Activated CD8-positive, alpha-beta memory T cell treated with anti-CD3 and anti-CD28 coated beads, Interleukin-2, amount 10 ng/mL, durations not matched to agents 7 days and 5 days (primary cell): ENCODE measurements at regions of chr5 and their contacts with region 1.

Region 1: GRCh38 chr5:134289509-134290113 is 63.7 kb upstream of the PPP2CA start:
- DNase-seq: peak; percentile 46
- ATAC-seq: peak; percentile 67
- H3K4me3 Mint-ChIP-seq: no peak overlapping the region
- H3K27ac Mint-ChIP-seq: no peak overlapping the region
- H3K4me1 Mint-ChIP-seq: peaks cover 5% of the 10 kb centered on the region
- H3K27me3 Mint-ChIP-seq: peaks cover 18% of the 10 kb centered on the region

Region 2: GRCh38 chr5:134184155-134185135 is 105.2 kb before region 1 on chr5:
- CTCF ChIA-PET with region 1: interaction called, 48 read pairs
- DNase-seq: peak; percentile 84
- ATAC-seq: peak; percentile 96
- H3K4me3 Mint-ChIP-seq: no peak overlapping the region
- H3K27ac Mint-ChIP-seq: no peak overlapping the region
- H3K4me1 Mint-ChIP-seq: no peaks in the 10 kb centered on the region
- H3K27me3 Mint-ChIP-seq: peaks cover 2% of the 10 kb centered on the region

Region 3: GRCh38 chr5:134267366-134268018 is 22.1 kb before region 1 on chr5:
- CTCF ChIA-PET with region 1: no interaction called
- DNase-seq: no peak
- ATAC-seq: no peak
- H3K4me3 Mint-ChIP-seq: no peak overlapping the region
- H3K27ac Mint-ChIP-seq: no peak overlapping the region
- H3K4me1 Mint-ChIP-seq: no peaks in the 10 kb centered on the region
- H3K27me3 Mint-ChIP-seq: peaks cover 13% of the 10 kb centered on the region